ENCODE measurements at regions of chr16 and their contacts with region 1.

Region 1: GRCh38 chr16:85151603-85152413 is 39.5 kb upstream of the CIBAR2 start:
- DNase-seq: peak; percentile 27
- ATAC-seq: peak; percentile 77
- H3K4me3 ChIP-seq: no peak overlapping the region
- H3K27ac ChIP-seq: no peak overlapping the region
- H3K4me1 ChIP-seq: peaks cover 4% of the 10 kb centered on the region; the same call in 1 of the 2 replicates
- H3K27me3 ChIP-seq: no peaks in the 10 kb centered on the region
- CTCF ChIP-seq: no peak

Region 2: GRCh38 chr16:85137323-85138072 is 14.3 kb before region 1 on chr16:
- CTCF ChIA-PET with region 1: no interaction called
- POLR2A ChIA-PET with region 1: interaction called, 16 read pairs
- intact Hi-C with region 1: no loop called
- DNase-seq: peak; percentile 45
- ATAC-seq: peak; percentile 85
- H3K4me3 ChIP-seq: peak overlapping the region; percentile 52
- H3K27ac ChIP-seq: no peak overlapping the region
- H3K4me1 ChIP-seq: peaks cover 4% of the 10 kb centered on the region; the same call in 1 of the 2 replicates
- H3K27me3 ChIP-seq: no peaks in the 10 kb centered on the region
- CTCF ChIP-seq: no peak

Measured in PC-3 (cell line).